AG04449 (cell line): ENCODE measurements at regions of chr20 and their contacts with region 1.

Region 1: DNA sequence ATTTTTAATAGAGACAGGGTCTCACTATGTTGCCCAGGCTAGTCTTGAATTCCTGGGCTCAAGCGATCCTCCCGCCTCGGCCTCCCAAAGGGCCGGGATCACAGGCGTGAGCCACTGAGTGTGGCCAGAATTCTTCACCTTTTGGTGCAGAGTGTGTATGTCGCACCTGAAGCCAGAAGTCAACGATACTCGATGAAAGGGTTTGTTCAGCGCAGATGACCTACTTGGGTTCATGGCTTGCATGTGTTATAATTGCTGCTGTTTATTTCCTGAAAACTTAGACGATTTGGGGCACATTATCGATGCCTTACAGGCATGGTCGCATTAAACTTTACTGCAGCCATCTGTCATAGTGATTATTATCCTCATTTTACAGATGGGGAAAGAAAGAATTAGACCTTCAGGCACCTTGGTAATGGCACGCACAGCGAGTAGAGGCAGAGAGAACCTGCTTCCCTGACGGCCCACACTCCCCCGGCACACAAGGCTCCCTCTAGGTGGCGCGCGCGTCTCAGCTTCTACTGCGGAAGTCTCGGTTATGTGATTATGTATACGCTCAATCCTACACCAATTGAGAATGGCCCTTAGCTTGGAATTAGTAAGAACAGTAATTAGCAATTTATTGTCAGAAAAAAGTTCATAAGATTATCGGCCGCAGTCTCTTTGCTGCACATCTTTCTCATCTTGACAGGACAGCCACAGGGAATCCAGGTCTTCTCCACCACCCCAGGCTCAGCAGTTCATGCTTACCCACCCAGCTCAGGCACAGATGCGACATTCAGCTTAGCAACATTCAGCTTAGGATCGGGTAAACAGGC is 212.8 kb upstream of the PROKR2 start:
- DNase-seq: no peak
- H3K4me3 ChIP-seq: no peak overlapping the region
- CTCF ChIP-seq: peak; percentile 96

Region 2: DNA sequence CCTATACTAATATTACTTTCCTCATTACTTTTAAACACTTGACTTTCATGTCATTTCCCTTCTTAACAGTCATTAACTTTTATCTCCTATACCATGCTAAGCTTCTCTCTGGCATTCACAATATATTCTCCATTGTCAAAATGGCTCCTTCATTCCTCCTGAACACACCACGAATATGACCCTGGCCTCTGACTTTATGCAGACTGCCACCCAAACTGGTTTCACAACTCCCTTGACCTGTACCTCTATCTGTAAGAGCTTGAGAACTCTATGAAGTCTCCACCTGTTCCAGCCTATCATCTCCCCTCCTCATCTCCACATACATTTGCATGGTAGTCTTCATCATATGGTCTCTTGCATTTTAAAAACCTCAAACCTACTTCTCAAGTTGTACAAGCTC is 13.8 kb after region 1 on chr20:
- CTCF ChIA-PET with region 1: interaction called, 10 read pairs
- POLR2A ChIA-PET with region 1: no interaction called
- DNase-seq: no peak
- H3K4me3 ChIP-seq: no peak overlapping the region
- CTCF ChIP-seq: no peak

Region 3: GRCh38 chr20:5569021-5569420 is 39.5 kb after region 1 on chr20:
- CTCF ChIA-PET with region 1: interaction called, 23 read pairs
- POLR2A ChIA-PET with region 1: no interaction called
- DNase-seq: no peak
- H3K4me3 ChIP-seq: no peak overlapping the region
- CTCF ChIP-seq: peak; percentile 7

Region 4: GRCh38 chr20:5797843-5798462 is 268.4 kb after region 1 on chr20:
- CTCF ChIA-PET with region 1: interaction called, 11 read pairs
- POLR2A ChIA-PET with region 1: no interaction called
- DNase-seq: no peak
- H3K4me3 ChIP-seq: no peak overlapping the region
- CTCF ChIP-seq: no peak

Region 5: DNA sequence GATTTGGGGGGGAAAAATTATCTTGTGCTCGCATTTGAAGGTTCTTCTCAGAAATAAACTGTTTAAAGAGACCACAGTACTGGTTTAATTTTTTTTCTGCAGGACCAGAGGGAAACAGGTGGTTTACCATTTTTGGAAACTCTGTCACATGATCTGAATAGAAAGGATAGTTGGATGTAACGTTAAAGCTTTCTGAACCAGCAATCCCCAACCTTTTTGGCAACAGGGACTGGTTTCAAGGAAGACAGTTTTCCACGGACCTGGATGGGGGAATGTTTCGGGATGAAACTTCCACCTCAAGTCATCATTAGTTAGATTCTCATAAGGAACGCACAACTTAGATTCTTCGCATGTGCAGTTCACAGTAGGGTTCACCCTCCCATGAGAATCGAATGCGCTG is 471.3 kb after region 1 on chr20:
- CTCF ChIA-PET with region 1: interaction called, 15 read pairs
- POLR2A ChIA-PET with region 1: no interaction called
- DNase-seq: no peak
- H3K4me3 ChIP-seq: no peak overlapping the region
- CTCF ChIP-seq: no peak

Region 6: GRCh38 chr20:6081236-6081635 is 551.7 kb after region 1 on chr20:
- CTCF ChIA-PET with region 1: interaction called, 170 read pairs
- POLR2A ChIA-PET with region 1: no interaction called
- DNase-seq: no peak
- H3K4me3 ChIP-seq: no peak overlapping the region
- CTCF ChIP-seq: no peak